Activated CD4-positive, alpha-beta memory T cell treated with anti-CD3 and anti-CD28 coated beads for 36 hours (primary cell): ENCODE measurements at regions of chr2 and their contacts with region 1.

Region 1: DNA sequence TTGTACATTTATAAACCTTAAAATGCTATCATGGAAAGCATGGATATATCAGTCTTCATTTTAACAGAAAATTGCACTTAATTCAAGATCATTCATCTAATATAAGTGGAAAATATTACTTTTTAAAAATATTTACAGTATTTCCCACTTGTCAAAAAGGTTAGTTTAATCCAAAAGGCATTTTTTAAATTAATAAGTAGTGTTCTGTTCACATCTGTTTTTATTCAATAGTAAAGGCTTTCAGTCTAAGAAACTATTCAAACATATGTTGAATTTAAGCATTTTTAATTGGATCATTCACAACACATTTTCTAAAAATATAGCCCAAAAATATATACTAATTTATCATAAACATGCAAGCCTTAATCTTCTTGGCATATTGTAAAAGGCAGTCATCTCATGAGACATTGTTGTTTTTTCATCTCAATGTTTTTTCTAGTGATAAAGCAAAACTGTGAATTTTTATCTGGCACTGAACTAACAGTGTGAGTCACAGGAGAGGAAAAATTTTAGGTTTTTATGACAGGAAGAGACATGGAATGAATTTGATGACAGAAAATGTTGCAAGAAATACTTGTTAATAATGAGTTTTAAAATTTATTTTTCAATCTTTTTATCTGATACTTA is 1642.5 kb upstream of the TMEFF2 start:
- DNase-seq: no peak
- H3K4me3 Mint-ChIP-seq: no peak overlapping the region
- H3K27ac Mint-ChIP-seq: no peak overlapping the region
- H3K4me1 Mint-ChIP-seq: no peaks in the 10 kb centered on the region
- H3K27me3 Mint-ChIP-seq: no peaks in the 10 kb centered on the region

Region 2: GRCh38 chr2:193824474-193824873 is 12.8 kb before region 1 on chr2:
- CTCF ChIA-PET with region 1: no interaction called
- POLR2A ChIA-PET with region 1: no interaction called
- intact Hi-C with region 1: loop called (anchors 1 kb)
- DNase-seq: no peak
- H3K4me3 Mint-ChIP-seq: no peak overlapping the region
- H3K27ac Mint-ChIP-seq: no peak overlapping the region
- H3K4me1 Mint-ChIP-seq: no peaks in the 10 kb centered on the region
- H3K27me3 Mint-ChIP-seq: no peaks in the 10 kb centered on the region

Region 3: GRCh38 chr2:193847991-193848390 is 10.8 kb after region 1 on chr2:
- CTCF ChIA-PET with region 1: no interaction called
- POLR2A ChIA-PET with region 1: no interaction called
- intact Hi-C with region 1: no loop called
- DNase-seq: no peak
- H3K4me3 Mint-ChIP-seq: no peak overlapping the region
- H3K27ac Mint-ChIP-seq: no peak overlapping the region
- H3K4me1 Mint-ChIP-seq: no peaks in the 10 kb centered on the region
- H3K27me3 Mint-ChIP-seq: no peaks in the 10 kb centered on the region